Thyroid gland (tissue), 4 donors: ENCODE measurements at regions of chrX and their contacts with region 1.

Region 1: DNA sequence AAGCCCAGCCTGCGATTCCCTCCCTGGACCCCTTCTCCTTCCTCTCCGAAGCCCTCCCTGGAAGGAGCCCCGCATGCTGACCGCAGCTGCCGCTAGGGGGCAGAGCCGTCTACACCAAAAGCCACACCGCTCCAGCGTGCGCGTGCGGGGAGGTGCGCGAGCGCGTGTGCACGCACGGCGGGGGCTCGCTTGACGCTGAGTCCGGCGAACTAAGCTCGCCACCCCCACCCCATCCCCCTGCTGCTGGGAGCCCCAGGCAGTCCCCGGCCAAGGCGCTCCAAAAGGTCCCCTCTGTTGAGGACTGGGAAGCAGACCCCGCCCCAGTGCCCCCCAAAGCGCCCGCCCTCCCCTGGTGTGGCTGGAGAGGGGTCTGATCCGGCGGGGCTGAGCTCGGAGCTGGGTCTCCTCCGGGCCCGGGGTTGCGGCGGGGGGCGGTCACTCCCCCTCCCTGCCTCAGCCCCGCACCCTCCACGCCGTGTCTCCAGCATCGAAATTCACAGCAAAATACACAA is 11.0 kb upstream of the CCNQ start:
- DNase-seq: peak; percentile 53 to 70
- H3K4me3 ChIP-seq: peak overlapping the region in 1 of 3 donors; percentile 30
- H3K27ac ChIP-seq: no peak overlapping the region
- H3K4me1 ChIP-seq: peaks cover 0 to 5% of the 10 kb centered on the region in 2 donors
- H3K27me3 ChIP-seq: no peaks in the 10 kb centered on the region
- CTCF ChIP-seq: peak; percentile 27 to 79 (median 53)
- POLR2A ChIP-seq: no peak

Region 2: GRCh38 chrX:153381684-153382532 is 228.1 kb before region 1 on chrX:
- intact Hi-C with region 1: no loop called
- DNase-seq: peak in 1 of 2 donors; percentile 22
- H3K4me3 ChIP-seq: no peak overlapping the region
- H3K27ac ChIP-seq: no peak overlapping the region
- H3K4me1 ChIP-seq: peaks cover 0 to 5% of the 10 kb centered on the region in 2 donors
- H3K27me3 ChIP-seq: no peaks in the 10 kb centered on the region
- CTCF ChIP-seq: no peak
- POLR2A ChIP-seq: no peak

Region 3: DNA sequence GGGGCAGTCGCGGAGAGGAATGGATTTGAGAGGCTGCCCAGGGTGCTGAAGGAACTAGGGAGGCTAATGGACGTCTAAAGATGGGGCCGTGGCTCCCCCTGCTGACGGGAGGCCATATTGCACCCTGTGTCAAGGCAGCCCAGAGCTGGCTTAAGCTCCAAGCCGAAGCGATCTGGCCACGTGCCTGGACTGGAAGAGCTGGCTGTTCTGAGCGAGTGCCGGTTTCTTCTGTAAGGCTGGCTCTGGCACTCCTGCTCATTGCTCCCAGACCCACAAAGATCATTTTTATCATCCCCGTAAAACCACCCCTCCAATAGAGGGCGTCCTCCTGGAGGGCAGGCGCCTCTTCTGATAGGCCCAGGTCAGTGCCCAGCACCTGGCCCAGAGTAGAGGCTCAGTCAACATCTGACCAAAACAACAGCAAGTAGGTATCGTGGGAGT is 58.0 kb after region 1 on chrX:
- intact Hi-C with region 1: loop called (anchors 5 kb)
- DNase-seq: peak; percentile 88 to 89
- H3K4me3 ChIP-seq: no peak overlapping the region
- H3K27ac ChIP-seq: no peak overlapping the region
- H3K4me1 ChIP-seq: no peaks in the 10 kb centered on the region
- H3K27me3 ChIP-seq: no peaks in the 10 kb centered on the region
- CTCF ChIP-seq: peak in 5 of 6 experiments; percentile 46 to 75 (median 59)
- POLR2A ChIP-seq: no peak